GM12878 (cell line): ENCODE measurements at regions of chr4 and their contacts with region 1.

Region 1: GRCh38 chr4:120071192-120071795 is 4.6 kb upstream of the MAD2L1 start:
- DNase-seq: no peak
- ATAC-seq: no peak
- H3K4me3 ChIP-seq: no peak overlapping the region
- H3K27ac ChIP-seq: no peak overlapping the region
- H3K4me1 ChIP-seq: peaks cover 5% of the 10 kb centered on the region
- H3K27me3 ChIP-seq: no peaks in the 10 kb centered on the region
- CTCF ChIP-seq: peak in 2 of 3 experiments; percentile 48 to 58; a peak in 4 of 6 replicates
- EP300 ChIP-seq: no peak
- POLR2A ChIP-seq: no peak
- RAD21 ChIP-seq: peak; percentile 63

Region 2: DNA sequence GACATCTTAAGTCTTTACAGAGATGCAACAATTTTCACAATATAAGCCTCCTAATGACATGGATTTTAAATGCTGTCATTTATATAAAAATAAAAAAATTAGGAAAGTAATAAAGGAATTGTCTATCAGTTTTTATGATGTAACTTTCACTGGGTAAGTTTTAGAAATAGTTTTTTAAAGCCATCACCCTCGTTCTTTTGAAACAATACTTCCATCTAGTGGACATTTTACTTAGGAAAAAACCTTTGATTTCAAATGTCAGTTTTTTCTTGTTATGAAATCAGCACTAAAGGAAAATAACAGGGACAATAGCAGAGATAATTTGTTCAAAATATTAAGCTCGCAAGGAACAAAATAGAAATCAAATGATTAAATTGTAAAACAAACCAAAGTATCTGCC is 1025.3 kb after region 1 on chr4:
- CTCF ChIA-PET with region 1: no interaction called
- POLR2A ChIA-PET with region 1: no interaction called
- RAD21 ChIA-PET with region 1: no interaction called
- SMC1A ChIA-PET with region 1: no interaction called
- in situ Hi-C with region 1: loop called (anchors 10 kb)
- intact Hi-C with region 1: no loop called
- DNase-seq: no peak
- ATAC-seq: no peak
- H3K4me3 ChIP-seq: no peak overlapping the region
- H3K27ac ChIP-seq: no peak overlapping the region
- H3K4me1 ChIP-seq: no peaks in the 10 kb centered on the region
- H3K27me3 ChIP-seq: no peaks in the 10 kb centered on the region
- CTCF ChIP-seq: peak; percentile 1 to 41 (median 36); a peak in 3 of 6 replicates
- EP300 ChIP-seq: no peak
- POLR2A ChIP-seq: no peak
- RAD21 ChIP-seq: peak; percentile 55